ENCODE measurements at regions of chr6 and their contacts with region 1.

Region 1: GRCh38 chr6:116531675-116532570 is 13.6 kb downstream of the TRAPPC3L start:
- DNase-seq: peak; percentile 63
- CTCF ChIP-seq: peak; percentile 71

Region 2: GRCh38 chr6:116279260-116280063 is 252.5 kb before region 1 on chr6 and contains the start of gene TSPYL1:
- in situ Hi-C with region 1: loop called (anchors 10 kb)
- DNase-seq: peak; percentile 90
- CTCF ChIP-seq: peak; percentile 32

Region 3: DNA sequence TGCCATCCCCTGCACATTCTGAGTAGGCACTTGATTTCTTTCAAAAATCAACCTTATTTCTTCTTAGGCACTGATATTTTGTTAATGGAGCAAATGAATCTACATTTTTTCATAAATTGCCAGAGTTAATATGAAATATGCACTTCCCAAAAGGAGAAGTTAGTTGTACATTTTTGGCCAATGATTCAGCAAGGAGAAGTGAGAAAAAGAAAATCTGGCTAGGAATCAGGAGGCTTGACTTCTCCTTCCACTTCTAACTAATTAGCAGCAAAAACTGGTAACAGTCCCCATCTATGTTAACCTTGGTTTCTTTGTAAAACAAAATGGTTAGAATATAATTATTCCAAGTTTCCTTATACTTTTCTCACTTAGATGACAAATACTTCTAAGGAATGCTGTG is 168.2 kb before region 1 on chr6:
- in situ Hi-C with region 1: no loop called
- DNase-seq: no peak
- CTCF ChIP-seq: no peak